ENCODE measurements at regions of chrX and their contacts with region 1.

Region 1: DNA sequence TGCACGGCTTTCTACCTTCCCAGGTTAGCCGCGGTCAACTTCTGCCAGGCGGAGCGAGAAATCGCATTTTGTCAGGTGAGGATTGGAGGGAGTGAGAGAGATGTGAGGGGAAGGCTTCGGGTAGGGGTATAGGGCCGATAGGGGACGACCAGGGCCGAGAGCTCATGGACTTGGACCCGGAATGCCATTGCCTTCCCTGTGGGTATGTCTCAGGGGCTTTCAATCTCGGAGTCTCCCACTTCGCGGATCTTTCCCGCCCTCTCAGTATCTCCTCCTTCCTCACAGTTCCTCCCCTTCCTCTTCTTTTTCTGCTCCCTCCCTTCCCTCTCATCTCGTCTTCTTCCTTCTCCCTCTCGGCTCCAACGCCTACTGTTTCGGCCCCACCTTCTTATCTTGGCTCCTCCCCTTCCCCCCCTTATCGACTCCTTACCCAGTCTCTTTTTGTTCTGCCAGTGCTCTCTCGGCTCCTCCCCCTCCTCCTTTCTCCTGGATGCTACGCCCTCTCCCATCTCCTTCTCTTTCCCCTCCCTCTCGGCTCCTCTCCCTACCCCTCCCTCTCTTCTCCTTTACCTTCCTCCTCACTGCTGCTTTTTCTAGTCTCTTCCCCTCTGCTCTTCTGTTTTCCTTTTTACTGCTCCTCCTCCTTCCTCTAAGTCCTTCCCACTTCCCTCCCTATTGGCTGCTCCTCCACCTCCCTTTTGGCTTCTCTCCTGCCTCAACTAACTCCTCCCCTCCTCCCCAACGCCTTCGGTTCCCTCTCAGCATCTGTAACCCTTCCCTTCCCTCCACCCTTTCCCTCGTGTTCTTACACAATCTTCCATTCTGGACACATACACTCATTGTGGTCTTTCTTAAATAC is 29.4 kb upstream of the RBMX start:
- DNase-seq: peak; percentile 74
- H3K4me3 ChIP-seq: peak overlapping the region; percentile 80
- H3K27ac ChIP-seq: peak overlapping the region; percentile 88
- H3K4me1 ChIP-seq: peaks cover 8% of the 10 kb centered on the region
- H3K27me3 ChIP-seq: no peaks in the 10 kb centered on the region
- CTCF ChIP-seq: no peak

Region 2: GRCh38 chrX:136711147-136711546 is 198.8 kb before region 1 on chrX:
- intact Hi-C with region 1: loop called (anchors 10 kb)
- DNase-seq: peak; percentile 19
- H3K4me3 ChIP-seq: no peak overlapping the region
- H3K27ac ChIP-seq: no peak overlapping the region
- H3K4me1 ChIP-seq: peaks cover 13% of the 10 kb centered on the region
- H3K27me3 ChIP-seq: no peaks in the 10 kb centered on the region
- CTCF ChIP-seq: peak; percentile 56

Region 3: DNA sequence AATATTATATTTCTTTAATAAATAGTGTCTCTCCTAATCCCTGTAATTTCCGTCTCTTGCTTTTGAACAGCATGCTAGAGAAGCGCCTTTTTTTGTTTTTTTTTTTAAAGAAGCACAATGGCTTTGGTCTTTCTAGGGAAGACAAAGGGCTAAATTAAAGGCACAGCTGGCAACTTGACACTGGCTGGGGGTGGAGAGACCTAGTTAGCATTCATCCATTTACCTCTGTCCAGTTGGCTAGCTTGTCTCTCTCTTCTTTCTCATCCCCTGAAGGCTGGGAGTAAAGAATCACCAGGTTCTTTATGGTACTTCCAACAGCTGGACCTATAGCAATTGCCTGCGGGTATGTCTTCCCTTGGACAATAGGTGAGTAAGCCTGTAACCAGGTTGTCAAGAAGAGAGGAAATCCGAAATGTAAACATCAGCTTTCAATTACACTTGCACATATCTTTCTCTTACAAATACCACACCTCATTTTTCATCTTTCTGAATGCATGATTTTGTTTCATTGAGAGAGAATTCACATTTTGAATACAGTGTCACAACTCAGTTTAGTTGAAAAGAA is 302.2 kb after region 1 on chrX:
- intact Hi-C with region 1: no loop called
- DNase-seq: no peak
- H3K4me3 ChIP-seq: no peak overlapping the region
- H3K27ac ChIP-seq: no peak overlapping the region
- H3K4me1 ChIP-seq: no peaks in the 10 kb centered on the region
- H3K27me3 ChIP-seq: no peaks in the 10 kb centered on the region
- CTCF ChIP-seq: no peak